A549 (cell line): ENCODE measurements at regions of chr2 and their contacts with region 1.

Region 1: GRCh38 chr2:23824777-23825212 is 102.1 kb downstream of the ATAD2B start:
- DNase-seq: peak; percentile 43 to 60
- ATAC-seq: peak; percentile 79 to 87
- H3K4me3 ChIP-seq: no peak overlapping the region
- H3K27ac ChIP-seq: no peak overlapping the region
- H3K4me1 ChIP-seq: peaks cover 27% of the 10 kb centered on the region
- CTCF ChIP-seq: peak; percentile 88
- EP300 ChIP-seq: no peak
- POLR2A ChIP-seq: no peak
- RAD21 ChIP-seq: peak; percentile 80 to 83

Region 2: GRCh38 chr2:23803965-23804542 is 20.7 kb before region 1 on chr2:
- CTCF ChIA-PET with region 1: interaction called, 25 read pairs
- POLR2A ChIA-PET with region 1: no interaction called
- DNase-seq: peak; percentile 17 to 61
- ATAC-seq: peak; percentile 88 to 97
- H3K4me3 ChIP-seq: no peak overlapping the region
- H3K27ac ChIP-seq: peak overlapping the region in 1 of 2 experiments; percentile 11; a peak in 1 of 6 replicates
- H3K4me1 ChIP-seq: peaks cover 37% of the 10 kb centered on the region
- CTCF ChIP-seq: peak; percentile 46
- EP300 ChIP-seq: no peak
- POLR2A ChIP-seq: no peak
- RAD21 ChIP-seq: peak in 1 of 2 experiments; percentile 31; a peak in 1 of 5 replicates

Region 3: DNA sequence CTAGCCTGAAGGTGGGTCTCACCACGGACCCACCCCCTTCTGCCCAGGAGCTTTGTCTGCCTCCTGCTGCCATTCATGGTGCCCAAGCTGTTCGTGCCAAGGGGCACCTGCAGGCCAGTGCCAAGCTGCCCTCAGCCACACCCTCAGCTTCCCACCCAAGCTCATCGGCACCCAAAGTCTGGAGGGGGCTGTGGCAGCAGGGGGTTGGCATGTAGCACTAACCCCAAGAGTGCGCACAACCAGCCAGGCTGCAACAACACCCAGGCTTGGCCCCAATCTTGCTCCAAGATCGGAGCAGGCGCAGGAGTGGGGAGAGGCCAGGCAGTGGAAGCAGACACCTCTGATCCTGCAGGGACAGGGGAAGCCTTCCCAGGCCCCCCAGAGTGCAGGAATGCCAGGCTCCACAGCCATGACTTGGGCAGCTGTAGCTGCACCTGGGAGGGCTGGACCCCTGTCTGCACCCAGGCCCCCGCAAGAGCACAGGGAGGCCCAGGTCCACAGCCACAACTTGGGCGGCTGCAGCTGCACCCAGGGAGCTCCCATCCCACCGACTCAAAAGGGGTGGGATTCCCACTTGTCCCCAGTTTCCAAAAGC is 12.3 kb after region 1 on chr2:
- CTCF ChIA-PET with region 1: interaction called, 32 read pairs
- POLR2A ChIA-PET with region 1: no interaction called
- DNase-seq: no peak
- ATAC-seq: no peak
- H3K4me3 ChIP-seq: no peak overlapping the region
- H3K27ac ChIP-seq: no peak overlapping the region
- H3K4me1 ChIP-seq: no peaks in the 10 kb centered on the region
- CTCF ChIP-seq: no peak
- EP300 ChIP-seq: no peak
- POLR2A ChIP-seq: no peak
- RAD21 ChIP-seq: no peak

Region 4: GRCh38 chr2:24058564-24059271 is 233.9 kb after region 1 on chr2:
- CTCF ChIA-PET with region 1: interaction called, 13 read pairs
- POLR2A ChIA-PET with region 1: no interaction called
- DNase-seq: no peak
- ATAC-seq: peak in 1 of 2 experiments; percentile 25; a peak in 2 of 6 replicates
- H3K4me3 ChIP-seq: no peak overlapping the region
- H3K27ac ChIP-seq: no peak overlapping the region
- H3K4me1 ChIP-seq: peaks cover 7% of the 10 kb centered on the region; the same call in 1 of the 3 replicates
- CTCF ChIP-seq: no peak
- EP300 ChIP-seq: no peak
- POLR2A ChIP-seq: no peak
- RAD21 ChIP-seq: no peak